ENCODE measurements at regions of chr12 and their contacts with region 1.

Region 1: DNA sequence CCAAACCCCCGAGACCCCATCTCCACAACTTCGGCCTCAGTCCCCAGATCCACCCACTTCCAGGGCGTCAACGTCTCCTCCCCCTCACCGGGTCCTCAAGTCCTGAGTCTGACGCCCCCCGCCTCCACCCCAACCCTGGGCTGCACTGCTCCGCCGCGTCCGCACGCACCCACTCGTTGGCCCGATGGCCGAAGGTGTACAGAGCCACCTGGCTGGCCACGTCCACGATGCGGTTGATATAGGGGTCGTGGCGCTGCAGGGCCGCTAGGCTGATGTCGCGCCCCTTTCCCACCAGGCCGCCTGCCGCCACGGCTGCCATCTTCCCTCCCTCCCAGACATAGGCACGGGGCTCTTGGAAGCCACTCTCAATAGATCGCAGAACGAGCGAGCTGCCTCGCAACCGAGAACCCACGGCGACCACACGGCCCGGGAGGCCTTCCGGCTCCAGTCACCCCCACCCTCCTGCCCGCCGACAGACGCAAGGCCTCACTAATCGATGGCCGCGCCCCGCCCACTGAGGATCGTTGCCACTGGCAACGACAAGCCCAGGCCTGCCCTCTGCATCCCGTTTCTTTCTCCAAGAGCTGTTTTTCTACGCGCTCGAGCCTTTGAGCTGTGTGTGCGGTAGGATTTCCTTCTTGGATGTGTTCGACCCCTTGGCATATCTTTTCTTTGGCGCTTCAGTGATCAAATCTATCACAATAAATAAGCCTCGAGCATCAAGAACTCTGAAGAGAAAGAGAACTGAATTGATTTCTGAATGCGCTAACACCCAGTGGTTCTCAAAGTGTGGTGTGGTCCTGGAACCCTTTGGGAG is at the start of gene DCP1B:
- DNase-seq: peak; percentile 89 to 95 (median 93)
- H3K4me3 ChIP-seq: peak within 1 kb of the TSS; percentile 77 to 97
- H3K4me3 Mint-ChIP-seq: peak within 1 kb of the TSS; percentile 92 to 99 (median 98)
- H3K27ac ChIP-seq: peak within 1 kb of the TSS; percentile 90
- H3K27ac Mint-ChIP-seq: peak within 1 kb of the TSS; percentile 92 to 99 (median 99)
- H3K4me1 ChIP-seq: peaks cover 30% of the 10 kb centered on the region
- H3K4me1 Mint-ChIP-seq: peaks cover 22 to 40% (median 32%) of the 10 kb centered on the region in 4 donors
- H3K27me3 ChIP-seq: no peaks in the 10 kb centered on the region
- H3K27me3 Mint-ChIP-seq: peaks cover 0 to 2% of the 10 kb centered on the region in 2 donors
- total RNA-seq, gene DCP1B: 25.5 to 26.9 TPM

Region 2: DNA sequence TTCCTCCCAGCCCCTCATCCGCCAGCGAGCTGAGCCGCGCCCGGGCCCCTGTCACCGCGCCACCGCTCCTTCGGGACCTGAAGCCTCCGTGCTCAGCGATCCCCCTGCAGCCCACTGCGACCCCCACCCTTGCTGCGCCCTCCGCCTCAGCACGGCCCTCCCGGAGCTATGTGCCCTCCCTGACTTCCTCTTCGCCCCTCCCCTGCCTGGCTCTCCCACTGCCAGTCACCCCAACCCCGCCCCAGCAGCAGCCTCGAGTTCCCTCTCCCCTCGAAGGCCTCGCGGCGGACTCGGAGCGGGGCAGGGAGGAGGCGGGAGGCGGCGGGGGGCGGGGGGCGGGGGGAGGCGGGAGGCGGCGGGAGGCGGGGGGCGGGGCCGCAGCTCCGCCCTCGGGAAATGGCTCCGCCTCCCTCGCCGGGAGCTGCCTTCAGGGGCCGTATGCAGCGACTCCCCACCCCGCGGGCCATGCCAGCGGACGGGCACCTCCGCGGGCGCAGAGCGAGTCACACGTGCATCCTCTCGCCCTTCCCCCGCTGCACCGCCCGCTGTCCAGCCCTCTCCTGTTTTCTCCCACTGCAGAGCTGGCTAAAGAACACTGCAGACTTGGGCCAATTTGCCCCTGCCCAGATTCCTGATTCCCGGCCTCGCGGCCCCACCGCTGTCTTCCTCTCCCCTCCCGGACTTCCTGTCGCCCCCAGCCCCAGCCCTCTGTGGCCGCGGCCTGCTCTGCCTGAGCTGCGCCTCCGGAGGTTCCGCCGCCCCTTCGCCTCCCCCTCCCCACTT is 342.6 kb before region 1 on chr12:
- CTCF ChIA-PET with region 1: interaction called, 3 read pairs
- POLR2A ChIA-PET with region 1: interaction called, 4 read pairs
- intact Hi-C with region 1: loop called (anchors 10 kb)
- DNase-seq: peak; percentile 84 to 92 (median 90)
- H3K4me3 ChIP-seq: peak overlapping the region in 1 of 2 donors; percentile 49
- H3K4me3 Mint-ChIP-seq: peak overlapping the region; percentile 72 to 84 (median 82)
- H3K27ac ChIP-seq: no peak overlapping the region
- H3K27ac Mint-ChIP-seq: peak overlapping the region; percentile 88 to 93 (median 91)
- H3K4me1 ChIP-seq: peaks cover 16% of the 10 kb centered on the region
- H3K4me1 Mint-ChIP-seq: peaks cover 22 to 55% (median 29%) of the 10 kb centered on the region in 4 donors
- H3K27me3 ChIP-seq: no peaks in the 10 kb centered on the region
- H3K27me3 Mint-ChIP-seq: no peaks in the 10 kb centered on the region

Region 3: GRCh38 chr12:1690578-1691122 is 313.7 kb before region 1 on chr12 and contains the start of gene ADIPOR2:
- CTCF ChIA-PET with region 1: no interaction called
- POLR2A ChIA-PET with region 1: no interaction called
- intact Hi-C with region 1: loop called (anchors 1 kb)
- DNase-seq: peak; percentile 93 to 95 (median 94)
- H3K4me3 ChIP-seq: peak within 1 kb of the TSS; percentile 70 to 87
- H3K4me3 Mint-ChIP-seq: peak within 1 kb of the TSS; percentile 88 to 97 (median 93)
- H3K27ac ChIP-seq: peak within 1 kb of the TSS; percentile 73
- H3K27ac Mint-ChIP-seq: peak within 1 kb of the TSS; percentile 96 to 99 (median 99)
- H3K4me1 ChIP-seq: peaks cover 27% of the 10 kb centered on the region
- H3K4me1 Mint-ChIP-seq: peaks cover 26 to 53% (median 35%) of the 10 kb centered on the region in 4 donors
- H3K27me3 ChIP-seq: no peaks in the 10 kb centered on the region
- H3K27me3 Mint-ChIP-seq: peaks cover 0 to 1% of the 10 kb centered on the region in 2 donors
- total RNA-seq, gene ADIPOR2: 35.7 to 36.2 TPM

Region 4: DNA sequence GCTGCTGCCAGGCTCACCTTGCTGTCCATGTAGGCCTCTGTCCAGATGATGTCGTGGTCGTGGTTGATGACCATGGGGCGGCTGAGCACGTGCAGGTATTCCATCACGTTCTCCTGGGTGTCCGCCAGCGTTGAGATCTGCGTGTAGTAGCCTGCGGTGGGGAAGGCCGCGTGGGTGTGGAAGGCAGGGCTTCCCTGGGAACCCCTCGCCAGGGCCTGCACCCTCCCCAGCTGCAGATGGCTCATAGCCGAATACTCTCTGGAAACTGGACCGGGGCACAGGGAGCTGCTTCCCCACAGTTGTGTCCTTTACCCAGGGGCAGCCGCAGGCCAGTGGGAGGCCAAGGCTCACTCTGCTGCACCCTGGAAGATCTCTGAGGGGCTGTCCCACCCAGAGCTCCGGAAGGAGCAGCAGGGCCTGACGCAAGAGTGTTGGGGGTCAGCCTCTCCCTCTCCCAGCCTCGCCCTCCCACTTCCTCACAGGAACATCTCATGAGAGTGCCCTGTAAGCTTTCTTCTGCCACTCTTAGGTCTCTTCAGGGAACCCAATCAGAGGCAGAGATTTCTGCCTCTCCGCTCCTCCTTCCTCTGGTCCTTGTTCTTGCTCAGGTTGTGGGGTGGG is 121.4 kb before region 1 on chr12:
- CTCF ChIA-PET with region 1: no interaction called
- POLR2A ChIA-PET with region 1: no interaction called
- intact Hi-C with region 1: no loop called
- DNase-seq: no peak
- H3K4me3 ChIP-seq: no peak overlapping the region
- H3K4me3 Mint-ChIP-seq: no peak overlapping the region
- H3K27ac ChIP-seq: no peak overlapping the region
- H3K27ac Mint-ChIP-seq: no peak overlapping the region
- H3K4me1 ChIP-seq: no peaks in the 10 kb centered on the region
- H3K4me1 Mint-ChIP-seq: no peaks in the 10 kb centered on the region
- H3K27me3 ChIP-seq: no peaks in the 10 kb centered on the region
- H3K27me3 Mint-ChIP-seq: peaks cover 11 to 20% of the 10 kb centered on the region in 2 donors

Region 5: GRCh38 chr12:1896964-1897363 is 107.4 kb before region 1 on chr12:
- CTCF ChIA-PET with region 1: no interaction called
- POLR2A ChIA-PET with region 1: no interaction called
- intact Hi-C with region 1: no loop called
- DNase-seq: no peak
- H3K4me3 ChIP-seq: no peak overlapping the region
- H3K4me3 Mint-ChIP-seq: no peak overlapping the region
- H3K27ac ChIP-seq: no peak overlapping the region
- H3K27ac Mint-ChIP-seq: no peak overlapping the region
- H3K4me1 ChIP-seq: no peaks in the 10 kb centered on the region
- H3K4me1 Mint-ChIP-seq: no peaks in the 10 kb centered on the region
- H3K27me3 ChIP-seq: no peaks in the 10 kb centered on the region
- H3K27me3 Mint-ChIP-seq: peaks cover 16 to 21% of the 10 kb centered on the region in 2 donors

Region 6: GRCh38 chr12:1993341-1993740 is 11.0 kb before region 1 on chr12:
- CTCF ChIA-PET with region 1: interaction called, 6 read pairs
- POLR2A ChIA-PET with region 1: interaction called, 22 read pairs
- intact Hi-C with region 1: no loop called
- DNase-seq: peak in 1 of 5 donors; percentile 52
- H3K4me3 ChIP-seq: no peak overlapping the region
- H3K4me3 Mint-ChIP-seq: peak overlapping the region in 3 of 8 donors; percentile 33 to 66 (median 58)
- H3K27ac ChIP-seq: no peak overlapping the region
- H3K27ac Mint-ChIP-seq: peak overlapping the region; percentile 62 to 86 (median 74)
- H3K4me1 ChIP-seq: peaks cover 38% of the 10 kb centered on the region
- H3K4me1 Mint-ChIP-seq: peaks cover 33 to 49% (median 40%) of the 10 kb centered on the region in 4 donors
- H3K27me3 ChIP-seq: no peaks in the 10 kb centered on the region
- H3K27me3 Mint-ChIP-seq: no peaks in the 10 kb centered on the region

Region 7: GRCh38 chr12:2034633-2035430 is 30.5 kb after region 1 on chr12:
- CTCF ChIA-PET with region 1: interaction called, 7 read pairs
- POLR2A ChIA-PET with region 1: interaction called, 5 read pairs
- intact Hi-C with region 1: loop called (anchors 2 kb)
- DNase-seq: peak; percentile 74 to 84 (median 81)
- H3K4me3 ChIP-seq: peak overlapping the region in 1 of 2 donors; percentile 53
- H3K4me3 Mint-ChIP-seq: peak overlapping the region; percentile 69 to 78 (median 74)
- H3K27ac ChIP-seq: no peak overlapping the region
- H3K27ac Mint-ChIP-seq: peak overlapping the region in 5 of 7 donors; percentile 4 to 80 (median 36)
- H3K4me1 ChIP-seq: peaks cover 11% of the 10 kb centered on the region
- H3K4me1 Mint-ChIP-seq: peaks cover 6 to 11% (median 9%) of the 10 kb centered on the region in 4 donors
- H3K27me3 ChIP-seq: no peaks in the 10 kb centered on the region
- H3K27me3 Mint-ChIP-seq: peaks cover 24 to 27% of the 10 kb centered on the region in 2 donors

Region 8: GRCh38 chr12:2794736-2795289 is 790.5 kb after region 1 on chr12 and contains the start of gene FKBP4:
- CTCF ChIA-PET with region 1: no interaction called
- POLR2A ChIA-PET with region 1: no interaction called
- intact Hi-C with region 1: loop called (anchors 10 kb)
- DNase-seq: peak; percentile 83 to 92 (median 86)
- H3K4me3 ChIP-seq: peak within 1 kb of the TSS; percentile 81 to 83
- H3K4me3 Mint-ChIP-seq: peak within 1 kb of the TSS; percentile 91 to 97 (median 94)
- H3K27ac ChIP-seq: peak within 1 kb of the TSS; percentile 55
- H3K27ac Mint-ChIP-seq: peak within 1 kb of the TSS; percentile 77 to 96 (median 90)
- H3K4me1 ChIP-seq: peaks cover 11% of the 10 kb centered on the region
- H3K4me1 Mint-ChIP-seq: peaks cover 11 to 36% (median 14%) of the 10 kb centered on the region in 4 donors
- H3K27me3 ChIP-seq: no peaks in the 10 kb centered on the region
- H3K27me3 Mint-ChIP-seq: no peaks in the 10 kb centered on the region
- total RNA-seq, gene FKBP4: 51.3 to 53.3 TPM

Measured in CD4-positive, alpha-beta memory T cell (primary cell).